ENCODE measurements at regions of chr5 and their contacts with region 1.

Region 1: GRCh38 chr5:141564216-141564692 is 54.5 kb downstream of the DIAPH1 start:
- DNase-seq: peak; percentile 78
- H3K4me3 Mint-ChIP-seq: no peak overlapping the region
- H3K27ac Mint-ChIP-seq: peak overlapping the region; percentile 72
- H3K4me1 Mint-ChIP-seq: peaks cover 33% of the 10 kb centered on the region
- H3K27me3 Mint-ChIP-seq: no peaks in the 10 kb centered on the region
- CTCF ChIP-seq: peak; percentile 92

Region 2: DNA sequence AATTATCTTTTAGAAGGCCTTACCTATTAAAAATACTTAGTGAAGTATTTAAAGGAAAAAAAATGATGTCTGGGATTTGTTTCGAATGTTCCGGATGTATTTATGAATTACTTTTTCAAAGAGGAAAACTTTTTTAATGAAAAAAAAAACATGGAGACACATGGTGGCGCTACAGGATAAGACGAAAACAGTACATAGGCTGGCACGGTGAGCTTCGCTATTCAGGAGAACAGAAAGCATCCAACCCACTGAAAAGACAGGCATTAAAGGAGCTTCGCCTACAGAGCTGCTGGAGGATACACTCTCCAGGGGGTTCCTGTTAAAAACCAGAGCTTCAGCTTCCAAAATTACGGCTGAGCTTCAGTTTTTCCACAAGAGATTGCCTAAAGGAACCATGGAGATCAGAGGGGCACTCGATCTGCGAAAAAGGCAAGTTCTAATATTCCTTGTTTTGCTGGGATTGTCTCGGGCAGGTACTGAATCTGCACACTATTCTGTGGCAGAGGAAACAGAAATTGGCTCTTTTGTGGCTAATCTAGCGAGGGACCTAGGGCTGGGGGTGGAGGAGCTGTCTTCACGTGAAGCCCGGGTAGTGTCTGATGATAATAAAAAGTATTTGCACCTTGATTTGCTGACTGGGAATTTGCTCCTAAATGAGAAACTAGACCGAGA is 341.0 kb before region 1 on chr5 and contains the start of gene PCDHB14:
- CTCF ChIA-PET with region 1: interaction called, 43 read pairs
- intact Hi-C with region 1: loop called (anchors 1 kb)
- DNase-seq: peak; percentile 66
- H3K4me3 Mint-ChIP-seq: peak within 1 kb of the TSS; percentile 75
- H3K27ac Mint-ChIP-seq: peak within 1 kb of the TSS; percentile 60
- H3K4me1 Mint-ChIP-seq: no peaks in the 10 kb centered on the region
- H3K27me3 Mint-ChIP-seq: no peaks in the 10 kb centered on the region
- CTCF ChIP-seq: peak; percentile 63
- total RNA-seq, gene PCDHB14: 5.7 and 6.3 TPM in 2 replicates

Region 3: DNA sequence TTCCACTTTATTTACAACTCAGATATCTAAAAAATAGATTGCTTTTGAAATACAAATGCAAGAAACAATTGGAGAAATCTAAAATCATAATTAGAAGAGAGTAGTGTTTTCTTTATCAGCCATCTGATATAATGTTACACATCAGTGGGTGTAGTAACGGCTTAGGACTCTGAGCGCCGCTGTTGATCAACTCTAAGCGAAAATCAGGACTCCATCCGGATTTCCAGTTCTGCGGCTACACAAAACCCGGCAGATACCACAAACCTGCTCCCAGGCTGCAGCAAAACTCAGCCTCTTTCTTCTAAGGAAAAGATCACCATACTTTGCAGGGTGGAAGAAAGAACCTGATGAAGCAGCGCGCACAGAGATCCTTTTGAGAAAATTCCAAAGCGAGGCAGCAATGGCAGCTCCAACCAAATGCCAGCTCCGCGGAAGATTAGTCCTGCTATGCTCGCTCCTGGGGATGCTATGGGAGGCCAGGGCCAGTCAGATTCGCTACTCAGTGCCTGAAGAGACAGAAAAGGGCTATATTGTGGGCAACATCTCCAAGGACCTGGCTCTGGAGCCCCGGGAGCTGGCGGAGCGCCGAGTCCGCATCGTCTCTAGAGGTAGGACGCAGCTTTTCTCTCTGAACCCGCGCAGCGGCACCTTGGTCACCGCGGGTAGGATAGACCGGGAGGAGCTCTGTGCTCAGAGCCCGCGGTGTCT is 161.5 kb before region 1 on chr5 and contains the start of gene PCDHGA9:
- CTCF ChIA-PET with region 1: interaction called, 22 read pairs
- intact Hi-C with region 1: loop called (anchors 1 kb)
- DNase-seq: peak; percentile 73
- H3K4me3 Mint-ChIP-seq: peak within 1 kb of the TSS; percentile 95
- H3K27ac Mint-ChIP-seq: peak within 1 kb of the TSS; percentile 68
- H3K4me1 Mint-ChIP-seq: peaks cover 17% of the 10 kb centered on the region
- H3K27me3 Mint-ChIP-seq: no peaks in the 10 kb centered on the region
- CTCF ChIP-seq: peak; percentile 83
- total RNA-seq, gene PCDHGA9: 16.0 and 18.1 TPM in 2 replicates

Region 4: DNA sequence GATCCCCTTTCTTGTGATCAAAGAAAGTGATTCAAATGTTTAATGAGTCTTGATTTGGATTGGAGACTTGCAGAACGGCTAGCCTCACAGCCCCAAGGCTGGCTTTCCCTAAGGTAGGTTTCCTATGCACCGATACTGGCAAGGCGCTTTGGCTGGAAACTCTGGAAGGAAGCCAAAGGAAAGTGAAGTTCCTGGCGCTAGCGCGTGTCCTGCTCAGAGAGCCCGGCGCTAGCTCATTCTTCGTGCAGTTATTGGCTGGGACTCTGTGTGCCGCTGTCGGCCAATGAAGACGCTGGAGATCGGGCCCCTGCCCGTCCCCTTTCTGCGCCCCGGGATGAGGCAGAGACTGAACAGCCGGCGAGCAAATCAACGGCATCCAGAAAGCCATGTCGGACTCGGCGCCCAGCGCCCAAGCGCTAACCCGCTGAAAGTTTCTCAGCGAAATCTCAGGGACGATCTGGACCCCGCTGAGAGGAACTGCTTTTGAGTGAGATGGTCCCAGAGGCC is 88.6 kb before region 1 on chr5 and contains the start of gene PCDHGC3:
- CTCF ChIA-PET with region 1: interaction called, 11 read pairs
- intact Hi-C with region 1: loop called (anchors 5 kb)
- DNase-seq: peak; percentile 95
- H3K4me3 Mint-ChIP-seq: peak within 1 kb of the TSS; percentile 91
- H3K27ac Mint-ChIP-seq: peak within 1 kb of the TSS; percentile 80
- H3K4me1 Mint-ChIP-seq: peaks cover 10% of the 10 kb centered on the region
- H3K27me3 Mint-ChIP-seq: no peaks in the 10 kb centered on the region
- CTCF ChIP-seq: no peak
- total RNA-seq, gene PCDHGC3: 49.4 and 73.0 TPM in 2 replicates

Region 5: GRCh38 chr5:141496038-141496437 is 68.2 kb before region 1 on chr5:
- CTCF ChIA-PET with region 1: no interaction called
- intact Hi-C with region 1: no loop called
- DNase-seq: no peak
- H3K4me3 Mint-ChIP-seq: no peak overlapping the region
- H3K27ac Mint-ChIP-seq: no peak overlapping the region
- H3K4me1 Mint-ChIP-seq: no peaks in the 10 kb centered on the region
- H3K27me3 Mint-ChIP-seq: no peaks in the 10 kb centered on the region
- CTCF ChIP-seq: no peak

Region 6: DNA sequence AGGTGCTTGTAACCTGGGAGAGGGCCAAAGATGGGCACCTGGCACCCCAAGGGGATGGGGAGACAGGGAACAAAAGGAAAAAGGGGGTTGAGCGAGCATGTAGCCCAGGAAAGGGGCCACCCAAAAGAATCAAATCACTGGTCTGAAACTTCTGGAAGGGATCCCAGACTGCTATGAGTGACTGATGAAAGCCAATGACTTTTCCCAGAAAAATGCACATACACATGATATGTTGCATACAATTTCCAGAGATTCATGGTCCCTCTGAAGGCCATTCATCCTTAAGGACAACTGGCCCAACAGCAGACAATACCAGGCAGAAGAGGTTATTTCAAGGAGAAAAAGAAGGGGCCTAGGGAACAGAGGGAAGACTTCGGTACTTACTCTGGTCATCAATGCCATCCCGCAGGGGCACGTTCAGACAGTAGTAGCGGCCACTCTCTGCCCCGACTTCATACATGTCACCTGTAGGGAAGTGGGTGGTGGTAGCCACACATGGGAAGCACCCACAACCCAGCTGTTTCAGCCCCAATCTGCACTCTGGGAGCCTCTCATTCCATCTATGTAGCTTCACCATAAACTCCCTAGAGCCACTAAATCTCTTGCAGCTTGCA is 64.0 kb after region 1 on chr5:
- CTCF ChIA-PET with region 1: no interaction called
- intact Hi-C with region 1: no loop called
- DNase-seq: no peak
- H3K4me3 Mint-ChIP-seq: no peak overlapping the region
- H3K27ac Mint-ChIP-seq: no peak overlapping the region
- H3K4me1 Mint-ChIP-seq: no peaks in the 10 kb centered on the region
- H3K27me3 Mint-ChIP-seq: no peaks in the 10 kb centered on the region
- CTCF ChIP-seq: no peak